K562 (cell line): ENCODE measurements at regions of chr16 and their contacts with region 1.

Region 1: DNA sequence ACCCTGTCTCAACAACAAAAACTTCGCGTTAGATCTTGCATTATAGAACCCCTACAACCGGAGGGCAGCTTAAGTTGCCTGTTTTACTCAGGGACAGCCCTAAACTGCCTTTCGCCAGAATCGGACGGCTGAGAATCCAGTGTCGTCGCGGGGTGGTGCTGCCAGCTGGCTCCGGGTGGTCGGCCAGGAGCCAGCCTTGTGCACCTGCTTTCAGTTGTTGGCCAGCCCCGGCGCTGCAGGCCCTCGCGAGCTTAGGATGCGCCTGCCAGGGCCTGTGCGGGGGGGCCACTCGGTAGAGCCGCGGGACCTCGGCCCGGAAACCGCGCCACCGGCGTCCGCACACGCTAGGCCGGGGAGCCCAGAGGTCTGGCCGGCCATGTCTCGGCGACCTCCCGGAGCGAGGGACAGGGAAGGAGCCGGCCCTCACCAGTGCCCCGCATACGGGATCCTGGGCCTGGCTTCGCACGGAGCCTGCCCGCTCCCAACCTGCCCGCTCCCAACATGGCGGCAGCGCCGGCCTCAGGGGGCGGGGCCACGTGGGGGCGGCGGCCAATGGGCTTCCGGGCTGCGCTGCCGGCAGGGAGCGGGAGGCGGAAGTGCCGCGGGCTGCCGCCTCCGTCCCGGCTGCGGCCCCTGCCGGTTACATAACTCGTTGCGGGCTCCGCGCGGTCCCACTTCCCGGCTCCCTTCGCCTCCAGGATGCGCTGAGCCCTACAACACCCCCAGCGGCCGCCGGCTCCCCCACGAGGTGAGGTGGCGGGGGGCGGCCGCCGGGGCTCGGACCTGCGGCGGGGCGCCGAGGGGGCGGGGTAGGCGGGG is 14.2 kb downstream of the NAA60 start:
- DNase-seq: peak; percentile 91 to 99 (median 99)
- ATAC-seq: peak; percentile 98
- H3K4me3 ChIP-seq: peak overlapping the region; percentile 81
- H3K27ac ChIP-seq: peak overlapping the region; percentile 99
- H3K4me1 ChIP-seq: peaks cover 23 to 28% of the 10 kb centered on the region in 2 experiments; a peak in 4 of 5 replicates
- H3K27me3 ChIP-seq: no peaks in the 10 kb centered on the region
- CTCF ChIP-seq: peak; percentile 35 to 93 (median 79); a peak in 4 of 6 replicates
- EP300 ChIP-seq: no peak
- POLR2A ChIP-seq: peak; percentile 92
- RAD21 ChIP-seq: peak; percentile 49 to 53

Region 2: GRCh38 chr16:3188925-3189825 is 268.5 kb before region 1 on chr16:
- CTCF ChIA-PET with region 1: no interaction called
- POLR2A ChIA-PET with region 1: no interaction called
- in situ Hi-C with region 1: no loop called
- intact Hi-C with region 1: loop called (anchors 5 kb)
- DNase-seq: peak; percentile 74 to 85 (median 77)
- ATAC-seq: peak; percentile 67
- H3K4me3 ChIP-seq: peak overlapping the region; percentile 55
- H3K27ac ChIP-seq: peak overlapping the region; percentile 70; the same call in 2 of the 3 replicates
- H3K4me1 ChIP-seq: peaks cover 23 to 55% of the 10 kb centered on the region in 2 experiments
- H3K27me3 ChIP-seq: no peaks in the 10 kb centered on the region
- CTCF ChIP-seq: no peak
- EP300 ChIP-seq: no peak; the same call in 1 of the 2 replicates
- POLR2A ChIP-seq: peak; percentile 54
- RAD21 ChIP-seq: no peak

Region 3: GRCh38 chr16:3389663-3390338 is 67.8 kb before region 1 on chr16:
- CTCF ChIA-PET with region 1: no interaction called
- POLR2A ChIA-PET with region 1: no interaction called
- in situ Hi-C with region 1: no loop called
- intact Hi-C with region 1: no loop called
- DNase-seq: peak in 2 of 4 experiments; percentile 32 to 41
- ATAC-seq: peak; percentile 65
- H3K4me3 ChIP-seq: no peak overlapping the region
- H3K27ac ChIP-seq: peak overlapping the region; percentile 73
- H3K4me1 ChIP-seq: peaks cover 22 to 27% of the 10 kb centered on the region in 2 experiments
- H3K27me3 ChIP-seq: no peaks in the 10 kb centered on the region
- CTCF ChIP-seq: no peak
- EP300 ChIP-seq: no peak
- POLR2A ChIP-seq: no peak
- RAD21 ChIP-seq: no peak

Region 4: GRCh38 chr16:3443108-3444031 is 14.3 kb before region 1 on chr16 and contains the starts of genes NAA60 and ZNF597:
- CTCF ChIA-PET with region 1: no interaction called
- POLR2A ChIA-PET with region 1: interaction called, 10 read pairs
- in situ Hi-C with region 1: no loop called
- intact Hi-C with region 1: no loop called
- DNase-seq: peak; percentile 66 to 81 (median 72)
- ATAC-seq: peak; percentile 97
- H3K4me3 ChIP-seq: peak within 1 kb of the TSS; percentile 41
- H3K27ac ChIP-seq: peak within 1 kb of the TSS; percentile 41; the same call in 2 of the 3 replicates
- H3K4me1 ChIP-seq: no peaks in the 10 kb centered on the region; a peak in 2 of 5 replicates
- H3K27me3 ChIP-seq: peaks cover 0 to 4% of the 10 kb centered on the region in 2 experiments; a peak in 1 of 5 replicates
- CTCF ChIP-seq: no peak
- EP300 ChIP-seq: no peak
- POLR2A ChIP-seq: no peak
- RAD21 ChIP-seq: no peak
- polyA plus RNA-seq, gene NAA60: 2.1 to 2.3 TPM
- polyA plus RNA-seq, gene ZNF597: 0.14 to 0.31 TPM